ENCODE measurements at regions of chr17 and their contacts with region 1.

Region 1: DNA sequence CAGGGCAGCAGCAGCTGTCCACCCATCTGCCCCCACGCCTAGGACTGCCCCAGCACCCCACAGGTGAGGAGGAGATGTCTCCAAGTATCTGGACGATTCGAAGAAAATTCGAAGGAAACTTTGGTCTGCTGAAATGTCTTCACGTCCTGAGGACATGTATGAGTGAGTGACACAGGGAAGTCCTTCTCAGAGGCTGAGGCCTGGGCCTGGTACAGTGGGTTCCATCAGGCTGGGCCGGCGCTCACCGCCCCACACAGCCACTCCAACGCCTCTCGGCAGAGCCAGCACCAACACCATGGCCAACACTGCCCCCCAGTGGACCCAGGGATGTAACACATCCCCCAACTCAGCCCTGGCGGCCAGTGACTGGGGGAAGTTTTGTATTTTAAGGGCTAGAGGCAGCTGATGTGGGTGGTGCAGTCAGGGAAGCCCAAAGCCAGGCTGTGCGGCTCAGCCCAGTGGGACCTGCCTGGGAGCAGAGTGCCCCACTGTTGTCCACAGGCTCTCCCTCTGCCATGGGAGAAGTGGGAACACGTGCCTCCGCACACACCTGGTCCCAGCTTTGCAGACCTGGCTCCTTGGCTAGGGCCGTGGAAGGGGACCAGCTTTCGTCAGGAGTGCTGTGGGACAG is 55.8 kb upstream of the FASN start:
- DNase-seq: peak; percentile 91

Region 2: GRCh38 chr17:82030470-82031302 is 123.2 kb before region 1 on chr17:
- intact Hi-C with region 1: loop called (anchors 1 kb)
- DNase-seq: peak; percentile 94

Region 3: DNA sequence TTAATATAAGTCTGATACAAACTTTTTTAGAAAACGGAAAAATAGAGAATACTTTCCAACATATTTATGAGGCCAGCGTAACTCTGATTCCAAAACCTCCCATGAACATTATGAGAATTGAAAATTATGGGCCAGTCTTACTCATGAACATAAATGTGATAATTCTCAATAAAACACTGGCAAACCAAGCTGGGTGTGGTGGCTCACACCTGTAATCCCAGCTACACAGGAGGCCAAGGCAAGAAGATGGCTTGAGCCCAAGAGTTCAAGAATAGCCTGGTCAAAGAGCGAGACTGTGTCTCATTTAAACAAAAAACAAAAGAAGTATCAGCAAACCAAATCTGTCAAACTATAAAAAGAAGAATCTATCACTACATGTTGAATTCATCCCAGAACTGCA is 11.0 kb after region 1 on chr17:
- intact Hi-C with region 1: no loop called
- DNase-seq: no peak

Region 4: DNA sequence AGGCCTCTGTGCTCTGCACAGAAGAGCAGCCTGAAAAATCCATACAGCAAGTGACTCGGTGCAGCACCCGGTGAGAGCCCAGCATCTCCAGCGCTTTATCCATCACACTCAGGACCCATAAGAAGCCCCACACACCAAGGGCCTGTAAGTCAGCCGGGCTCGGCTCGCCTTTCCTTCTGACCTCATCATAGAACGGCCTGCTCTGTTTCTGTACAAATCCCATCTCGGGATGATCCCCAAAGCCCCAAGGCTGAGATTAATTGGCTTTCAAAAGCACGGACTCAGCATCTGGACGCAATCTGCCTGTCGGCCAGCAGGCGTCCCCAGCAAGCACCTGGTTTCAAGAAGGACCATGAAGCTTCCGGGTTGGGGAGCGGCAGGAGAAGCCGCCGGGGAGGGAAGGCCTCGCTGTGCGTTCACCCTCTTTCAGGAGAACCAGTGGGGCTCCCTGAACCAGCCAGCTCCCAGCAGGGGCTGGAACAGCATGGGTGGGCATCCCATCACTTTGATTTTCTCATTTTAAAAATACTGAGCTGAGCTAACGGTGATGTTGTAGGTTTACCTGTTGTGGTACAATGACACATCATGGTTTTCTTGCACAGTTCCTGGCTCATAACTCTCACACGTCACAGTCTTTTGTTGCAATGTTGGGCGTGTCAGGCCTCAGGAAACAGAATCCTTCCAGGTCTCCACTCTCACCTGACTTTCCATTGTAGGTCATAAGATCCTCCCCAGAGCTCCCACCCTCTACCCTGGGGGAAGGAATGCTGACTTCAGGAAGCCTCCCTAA is 52.1 kb after region 1 on chr17:
- intact Hi-C with region 1: no loop called
- DNase-seq: peak; percentile 93

Region 5: DNA sequence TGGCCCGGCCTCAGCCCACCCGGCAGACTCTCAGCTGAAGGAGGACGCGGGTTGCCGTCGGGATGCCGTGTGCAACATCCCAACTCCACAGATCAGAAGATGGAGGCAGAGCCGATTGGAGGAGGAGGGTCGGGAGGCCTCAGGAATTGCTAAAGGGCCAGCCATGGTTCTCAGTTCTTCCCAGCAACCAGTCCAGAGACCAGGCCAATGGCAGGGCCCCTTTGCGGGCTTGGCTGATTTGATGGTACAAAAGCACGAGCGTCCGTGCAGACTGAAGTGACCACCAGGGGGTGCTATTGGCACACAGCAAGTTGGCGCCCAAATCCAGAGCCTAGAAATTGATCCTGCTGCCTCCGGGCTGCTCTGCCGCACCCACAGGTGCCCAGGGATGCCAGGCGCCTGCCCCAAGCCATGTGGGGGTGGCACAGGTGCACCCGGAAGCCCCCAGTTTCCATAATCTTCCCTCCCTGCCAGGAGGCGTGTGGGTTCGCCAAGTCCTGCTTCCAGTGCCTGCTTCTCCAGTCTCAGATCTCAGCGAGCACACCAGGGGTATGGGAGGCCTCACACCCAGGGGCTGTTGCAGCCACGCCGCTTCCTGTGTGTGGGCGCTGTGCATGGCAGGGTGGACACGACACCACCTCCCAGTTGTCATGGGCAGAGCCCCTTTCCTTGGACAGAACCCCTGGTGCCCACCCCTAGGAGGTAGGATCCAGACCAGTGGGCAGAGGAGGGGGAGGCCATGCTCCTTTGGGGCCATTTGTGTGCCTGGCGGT is 198.0 kb after region 1 on chr17:
- intact Hi-C with region 1: no loop called
- DNase-seq: peak; percentile 90